GM18951 (cell line): ENCODE measurements at regions of chr3 and their contacts with region 1.

Region 1: GRCh38 chr3:170171563-170171962 is 10.0 kb downstream of the PHC3 start:
- POLR2A ChIP-seq: no peak

Region 2: DNA sequence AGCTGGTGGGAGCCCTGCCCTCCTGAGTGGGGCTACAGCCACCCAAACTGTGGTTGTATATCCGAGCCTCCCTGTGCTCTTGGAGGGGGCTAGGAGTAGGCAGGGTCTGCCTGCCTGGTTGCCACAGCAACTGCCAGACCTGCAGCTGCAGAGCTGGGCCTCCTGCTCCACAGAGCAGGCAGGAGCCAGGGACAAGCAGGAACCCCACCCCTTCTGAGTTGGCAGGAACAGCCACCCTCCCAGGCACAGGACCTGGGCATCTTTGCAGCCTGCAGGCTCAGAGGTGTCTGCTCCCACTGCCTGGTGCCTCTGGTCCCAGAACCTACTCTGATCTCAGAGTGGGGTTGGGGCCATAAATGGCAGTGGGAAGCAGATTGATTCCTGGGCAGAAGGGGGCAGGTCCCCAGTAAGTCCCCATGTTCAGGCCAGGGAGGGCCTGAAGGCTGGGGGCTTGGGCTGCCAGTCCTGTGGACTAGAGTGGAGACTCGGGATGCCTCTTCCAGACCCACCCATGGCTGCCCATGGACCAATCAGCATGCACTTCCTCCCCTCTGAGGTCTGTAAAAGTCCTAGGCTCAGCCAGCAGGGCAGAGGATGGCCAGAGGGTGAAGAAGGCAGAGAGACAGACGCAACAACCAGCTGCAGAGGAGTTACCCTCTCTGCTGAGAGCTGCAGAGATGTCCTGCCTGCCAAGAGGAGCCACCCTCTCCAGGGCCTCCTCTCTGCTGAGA is 291.6 kb before region 1 on chr3:
- in situ Hi-C with region 1: no loop called
- POLR2A ChIP-seq: no peak

Region 3: DNA sequence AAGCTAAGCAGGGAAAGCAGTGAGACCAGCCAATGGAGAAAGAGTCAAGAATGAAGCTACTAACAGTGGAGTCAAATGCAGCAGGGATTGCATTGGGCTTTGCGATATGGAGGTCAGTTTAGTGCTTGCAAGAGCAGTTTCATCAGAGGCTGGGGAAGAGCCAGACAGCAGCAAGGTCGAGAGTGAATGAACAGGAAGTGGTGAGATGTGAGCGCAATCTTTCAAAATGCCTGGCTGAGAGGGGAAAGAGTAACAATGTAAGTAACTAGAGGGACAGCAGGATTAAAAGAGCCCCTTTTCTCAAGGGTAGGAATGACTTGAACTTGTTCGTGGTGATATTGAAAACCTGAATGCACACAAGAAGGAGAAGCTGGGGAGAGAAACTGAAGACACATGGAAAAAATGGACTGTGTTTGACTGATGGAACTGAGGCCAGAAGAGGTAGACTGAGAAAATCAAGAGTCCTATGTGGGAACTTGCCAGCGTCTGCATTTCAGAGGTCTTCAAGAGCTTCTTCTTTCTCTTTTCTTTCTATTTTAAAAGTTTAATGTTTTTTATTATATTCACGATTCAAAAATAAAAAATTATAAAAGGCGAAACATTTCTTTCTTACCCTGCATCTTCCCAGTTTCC is 164.4 kb before region 1 on chr3:
- in situ Hi-C with region 1: no loop called
- POLR2A ChIP-seq: no peak

Region 4: GRCh38 chr3:170128977-170129431 is 42.6 kb before region 1 on chr3:
- in situ Hi-C with region 1: loop called (anchors 10 kb)
- POLR2A ChIP-seq: no peak